PC-3 (cell line): ENCODE measurements at regions of chr10 and their contacts with region 1.

Region 1: GRCh38 chr10:117429643-117430265 is 54.5 kb upstream of the PDZD8 start:
- DNase-seq: no peak
- ATAC-seq: peak; percentile 31; the same call in 1 of the 2 replicates
- H3K4me3 ChIP-seq: no peak overlapping the region
- H3K27ac ChIP-seq: no peak overlapping the region
- H3K4me1 ChIP-seq: 0 out of 2 replicates have a peak, but pooled peaks cover 8% of the 10 kb centered on the region
- H3K27me3 ChIP-seq: no peaks in the 10 kb centered on the region
- CTCF ChIP-seq: no peak

Region 2: DNA sequence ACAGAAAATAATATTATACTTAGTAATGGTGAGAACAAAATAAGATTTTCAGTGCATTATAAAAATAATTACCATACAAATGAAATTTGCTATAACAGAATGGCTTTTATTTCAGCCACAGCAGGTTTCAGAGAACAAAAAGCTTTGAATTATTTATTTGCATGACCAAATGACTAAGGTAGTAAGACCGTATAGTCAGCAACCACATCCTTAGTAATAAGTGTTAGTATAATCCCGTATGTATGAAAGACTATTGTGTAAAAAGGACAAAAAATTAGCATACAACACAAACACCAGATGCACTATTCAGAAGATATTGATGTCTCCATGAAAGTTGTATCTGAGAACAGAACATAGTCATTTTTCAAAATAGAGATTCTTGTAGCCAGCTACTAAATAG is 66.7 kb before region 1 on chr10:
- CTCF ChIA-PET with region 1: no interaction called
- POLR2A ChIA-PET with region 1: no interaction called
- intact Hi-C with region 1: no loop called
- DNase-seq: peak; percentile 67
- ATAC-seq: peak; percentile 47
- H3K4me3 ChIP-seq: peak overlapping the region; percentile 39
- H3K27ac ChIP-seq: peak overlapping the region; percentile 85
- H3K4me1 ChIP-seq: peaks cover 85% of the 10 kb centered on the region
- H3K27me3 ChIP-seq: no peaks in the 10 kb centered on the region
- CTCF ChIP-seq: no peak

Region 3: DNA sequence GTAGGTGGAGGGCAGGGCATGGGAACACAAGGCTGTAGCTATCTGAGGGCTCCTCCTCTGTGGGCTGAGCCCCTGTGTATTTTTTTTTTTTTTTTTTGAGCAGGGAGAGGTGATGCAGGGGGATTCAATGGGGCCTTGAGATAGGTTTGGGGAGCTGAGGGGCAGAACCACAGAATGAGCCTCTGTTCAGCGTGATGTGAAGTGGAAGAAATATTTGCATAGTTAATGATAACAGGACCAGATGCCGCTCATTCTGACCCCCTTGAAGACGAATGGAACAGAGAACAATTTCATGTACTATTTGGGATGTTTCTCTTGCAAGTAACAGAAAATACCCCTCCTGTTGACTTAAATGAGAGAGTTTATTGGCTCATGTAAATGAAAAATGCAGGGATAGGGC is 43.1 kb after region 1 on chr10:
- CTCF ChIA-PET with region 1: interaction called, 14 read pairs
- POLR2A ChIA-PET with region 1: no interaction called
- intact Hi-C with region 1: no loop called
- DNase-seq: no peak
- ATAC-seq: no peak
- H3K4me3 ChIP-seq: no peak overlapping the region
- H3K27ac ChIP-seq: no peak overlapping the region
- H3K4me1 ChIP-seq: no peaks in the 10 kb centered on the region
- H3K27me3 ChIP-seq: no peaks in the 10 kb centered on the region
- CTCF ChIP-seq: no peak